ENCODE measurements at regions of chr5 and their contacts with region 1.

Region 1: DNA sequence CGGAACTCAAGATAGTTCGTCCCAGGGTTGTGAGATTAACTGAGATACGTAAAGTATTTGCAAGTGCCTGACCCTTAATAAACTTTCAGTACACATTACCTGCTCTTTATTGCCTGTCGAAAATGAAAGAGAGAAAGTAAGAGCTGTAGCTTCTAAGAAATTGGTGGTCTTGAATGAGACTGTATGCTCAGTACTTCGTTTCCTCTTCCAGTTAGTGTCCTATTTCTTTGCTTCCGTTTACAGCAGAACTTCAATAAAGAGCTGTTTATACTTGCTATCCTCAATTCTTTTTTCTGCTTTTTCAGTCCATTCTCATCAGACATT is 534 bp downstream of the SRFBP1 start:
- DNase-seq: no peak
- H3K4me3 Mint-ChIP-seq: peak overlapping the region; percentile 91
- H3K27ac Mint-ChIP-seq: peak overlapping the region; percentile 94
- H3K4me1 Mint-ChIP-seq: peaks cover 36% of the 10 kb centered on the region
- H3K27me3 Mint-ChIP-seq: peaks cover 6% of the 10 kb centered on the region

Region 2: DNA sequence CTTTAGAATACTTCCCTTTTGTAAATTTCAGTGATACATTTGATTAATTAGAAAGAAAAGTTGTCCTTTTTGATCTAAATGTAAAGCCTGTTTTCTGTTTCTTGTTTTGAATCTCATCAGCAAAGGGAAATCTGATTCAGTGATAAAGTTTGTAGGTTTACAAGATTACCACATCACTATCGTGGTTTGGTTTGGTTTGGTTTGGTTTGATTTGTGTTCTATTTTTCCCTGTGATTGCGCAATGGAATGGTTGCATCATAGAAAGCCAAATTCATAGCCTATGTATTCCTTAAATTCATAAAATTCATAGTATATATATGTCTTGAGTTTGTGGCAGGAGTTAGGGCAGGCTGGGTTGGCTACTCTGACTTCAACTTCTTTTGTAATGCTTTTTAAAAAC is 14.7 kb after region 1 on chr5:
- CTCF ChIA-PET with region 1: interaction called, 4 read pairs
- intact Hi-C with region 1: loop called (anchors 1 kb)
- DNase-seq: no peak
- H3K4me3 Mint-ChIP-seq: no peak overlapping the region
- H3K27ac Mint-ChIP-seq: no peak overlapping the region
- H3K4me1 Mint-ChIP-seq: peaks cover 38% of the 10 kb centered on the region
- H3K27me3 Mint-ChIP-seq: no peaks in the 10 kb centered on the region

Region 3: GRCh38 chr5:122007546-122007945 is 45.2 kb after region 1 on chr5:
- CTCF ChIA-PET with region 1: no interaction called
- intact Hi-C with region 1: loop called (anchors 1 kb)
- DNase-seq: no peak
- H3K4me3 Mint-ChIP-seq: no peak overlapping the region
- H3K27ac Mint-ChIP-seq: no peak overlapping the region
- H3K4me1 Mint-ChIP-seq: peaks cover 24% of the 10 kb centered on the region
- H3K27me3 Mint-ChIP-seq: no peaks in the 10 kb centered on the region

Region 4: GRCh38 chr5:122076664-122077365 is 114.5 kb after region 1 on chr5:
- CTCF ChIA-PET with region 1: interaction called, 18 read pairs
- intact Hi-C with region 1: loop called (anchors 1 kb)
- DNase-seq: peak; percentile 77
- H3K4me3 Mint-ChIP-seq: peak overlapping the region; percentile 66
- H3K27ac Mint-ChIP-seq: no peak overlapping the region
- H3K4me1 Mint-ChIP-seq: peaks cover 12% of the 10 kb centered on the region
- H3K27me3 Mint-ChIP-seq: peaks cover 52% of the 10 kb centered on the region

Region 5: DNA sequence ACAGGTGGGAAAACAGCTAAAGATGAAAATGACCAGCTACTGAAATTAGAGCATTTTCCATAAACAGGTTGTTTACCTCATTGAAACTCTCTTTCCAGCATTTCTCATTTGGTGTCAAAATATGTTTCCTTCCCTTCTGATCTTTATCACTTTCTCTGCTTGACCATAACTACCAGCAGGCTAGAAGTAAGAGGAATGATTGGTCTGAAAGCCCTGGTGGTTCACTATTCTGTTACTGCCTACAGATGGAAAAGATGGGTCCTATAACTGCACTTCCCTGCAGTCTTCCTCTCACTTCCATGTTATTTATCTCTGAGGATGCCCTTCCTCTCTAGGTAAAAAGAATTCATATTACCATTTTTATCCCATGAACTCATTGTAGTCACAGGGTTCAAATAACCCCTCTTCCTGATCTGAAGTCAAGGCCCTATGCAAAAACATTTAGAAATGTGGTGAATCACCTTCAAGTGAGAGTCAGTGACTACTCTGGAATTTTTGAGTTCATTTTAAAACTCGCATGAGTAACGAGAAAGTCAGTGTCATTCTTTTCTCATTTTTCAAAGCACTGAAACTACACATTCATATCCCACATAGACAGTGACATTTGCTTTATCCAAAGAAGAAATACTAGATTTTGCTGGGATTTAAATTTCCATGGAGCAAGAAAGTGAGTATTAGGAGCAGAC is 218.7 kb after region 1 on chr5:
- CTCF ChIA-PET with region 1: no interaction called
- intact Hi-C with region 1: loop called (anchors 1 kb)
- DNase-seq: no peak
- H3K4me3 Mint-ChIP-seq: no peak overlapping the region
- H3K27ac Mint-ChIP-seq: peak overlapping the region; percentile 30
- H3K4me1 Mint-ChIP-seq: peaks cover 17% of the 10 kb centered on the region
- H3K27me3 Mint-ChIP-seq: peaks cover 26% of the 10 kb centered on the region

Region 6: GRCh38 chr5:123511648-123512605 is 1549.6 kb after region 1 on chr5 and contains the start of gene CSNK1G3:
- CTCF ChIA-PET with region 1: no interaction called
- intact Hi-C with region 1: loop called (anchors 5 kb)
- DNase-seq: peak; percentile 98
- H3K4me3 Mint-ChIP-seq: peak within 1 kb of the TSS; percentile 97
- H3K27ac Mint-ChIP-seq: peak within 1 kb of the TSS; percentile 97
- H3K4me1 Mint-ChIP-seq: peaks cover 40% of the 10 kb centered on the region
- H3K27me3 Mint-ChIP-seq: peaks cover 5% of the 10 kb centered on the region
- total RNA-seq, gene CSNK1G3: 31.9 to 33.8 TPM

Measured in activated naive CD4-positive, alpha-beta T cell treated with anti-CD3 and anti-CD28 coated beads for 36 hours (primary cell).